SK-N-SH (cell line): ENCODE measurements at regions of chr15 and their contacts with region 1.

Region 1: DNA sequence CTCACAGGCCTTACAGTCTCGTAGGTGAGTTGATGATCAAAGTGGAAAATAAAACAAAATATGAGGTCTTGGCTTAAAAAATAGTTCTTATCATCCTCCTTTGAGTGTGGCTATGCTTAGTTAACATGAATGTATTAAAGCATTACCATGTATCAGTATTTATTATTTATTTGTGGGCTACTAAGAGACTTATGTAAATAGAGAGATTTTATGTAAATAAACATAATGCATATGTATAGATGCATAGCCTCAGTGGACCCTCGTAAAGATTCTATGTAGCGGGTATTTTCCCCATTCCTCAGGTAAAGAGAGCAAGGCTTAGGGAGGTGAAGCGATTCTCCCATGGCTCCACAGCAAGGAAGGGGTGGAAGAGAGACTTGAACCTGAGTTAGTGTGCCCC is 87.5 kb downstream of the TLE3 start:
- DNase-seq: no peak
- H3K4me3 ChIP-seq: no peak overlapping the region
- H3K27ac ChIP-seq: no peak overlapping the region
- H3K4me1 ChIP-seq: no peaks in the 10 kb centered on the region; a peak in 1 of 4 replicates
- H3K27me3 ChIP-seq: peaks cover 34% of the 10 kb centered on the region; the same call in 1 of the 2 replicates
- CTCF ChIP-seq: no peak
- EP300 ChIP-seq: no peak
- RAD21 ChIP-seq: no peak

Region 2: DNA sequence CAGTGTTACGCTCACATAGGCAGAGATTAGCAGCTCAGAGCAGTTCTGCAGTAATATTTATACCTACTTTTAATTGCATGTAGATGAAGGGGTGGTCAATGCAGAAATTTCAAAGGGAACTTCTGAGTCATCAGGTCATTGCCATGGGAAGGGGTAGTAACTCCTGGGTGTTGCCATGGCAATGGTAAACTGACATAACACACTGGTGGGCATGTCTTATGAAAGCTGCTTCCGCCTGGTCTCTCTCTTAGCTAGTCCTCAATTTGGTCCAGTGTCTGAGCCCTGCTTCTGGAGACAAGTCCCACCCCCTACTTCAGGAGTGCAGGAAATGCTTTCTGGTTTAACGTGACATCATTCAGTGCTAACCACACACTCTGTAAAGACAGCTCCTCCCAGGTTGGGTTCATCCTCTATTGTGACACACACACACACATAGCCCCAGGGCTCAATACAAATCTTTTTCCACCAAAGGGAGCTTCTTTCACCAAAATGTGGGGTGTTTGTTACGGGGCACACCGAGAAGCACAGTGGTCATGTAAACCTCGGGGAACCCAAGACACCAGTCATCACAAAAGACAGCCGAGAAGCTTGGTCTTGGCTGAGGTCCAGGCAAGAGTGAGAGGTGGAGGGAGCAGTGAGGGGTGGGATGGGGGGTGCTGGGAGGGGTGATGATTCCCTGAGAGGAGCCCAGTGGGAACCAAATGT is 13.0 kb after region 1 on chr15:
- CTCF ChIA-PET with region 1: interaction called, 11 read pairs
- POLR2A ChIA-PET with region 1: no interaction called
- DNase-seq: no peak
- H3K4me3 ChIP-seq: no peak overlapping the region
- H3K27ac ChIP-seq: no peak overlapping the region
- H3K4me1 ChIP-seq: peaks cover 10 to 17% of the 10 kb centered on the region in 2 experiments; a peak in 2 of 4 replicates
- H3K27me3 ChIP-seq: peaks cover 13% of the 10 kb centered on the region; the same call in 1 of the 2 replicates
- CTCF ChIP-seq: no peak
- EP300 ChIP-seq: no peak
- RAD21 ChIP-seq: no peak

Region 3: GRCh38 chr15:70033529-70034140 is 23.4 kb after region 1 on chr15:
- CTCF ChIA-PET with region 1: no interaction called
- POLR2A ChIA-PET with region 1: no interaction called
- DNase-seq: peak; percentile 94
- H3K4me3 ChIP-seq: peak overlapping the region; percentile 36 to 44; a peak in 3 of 4 replicates
- H3K27ac ChIP-seq: no peak overlapping the region; a peak in 1 of 4 replicates
- H3K4me1 ChIP-seq: peaks cover 8 to 25% of the 10 kb centered on the region in 2 experiments; a peak in 2 of 4 replicates
- H3K27me3 ChIP-seq: peaks cover 25% of the 10 kb centered on the region
- CTCF ChIP-seq: no peak
- EP300 ChIP-seq: peak; percentile 33 to 95; a peak in 3 of 4 replicates
- RAD21 ChIP-seq: peak; percentile 24